ENCODE measurements at regions of chr17 and their contacts with region 1.

Region 1: GRCh38 chr17:44044067-44044466 is 22.4 kb downstream of the LSM12 start:
- DNase-seq: no peak
- H3K4me3 ChIP-seq: no peak overlapping the region
- H3K27ac ChIP-seq: no peak overlapping the region
- H3K4me1 ChIP-seq: peaks cover 7 to 14% of the 10 kb centered on the region in 2 donors
- H3K27me3 ChIP-seq: no peaks in the 10 kb centered on the region
- CTCF ChIP-seq: no peak

Region 2: DNA sequence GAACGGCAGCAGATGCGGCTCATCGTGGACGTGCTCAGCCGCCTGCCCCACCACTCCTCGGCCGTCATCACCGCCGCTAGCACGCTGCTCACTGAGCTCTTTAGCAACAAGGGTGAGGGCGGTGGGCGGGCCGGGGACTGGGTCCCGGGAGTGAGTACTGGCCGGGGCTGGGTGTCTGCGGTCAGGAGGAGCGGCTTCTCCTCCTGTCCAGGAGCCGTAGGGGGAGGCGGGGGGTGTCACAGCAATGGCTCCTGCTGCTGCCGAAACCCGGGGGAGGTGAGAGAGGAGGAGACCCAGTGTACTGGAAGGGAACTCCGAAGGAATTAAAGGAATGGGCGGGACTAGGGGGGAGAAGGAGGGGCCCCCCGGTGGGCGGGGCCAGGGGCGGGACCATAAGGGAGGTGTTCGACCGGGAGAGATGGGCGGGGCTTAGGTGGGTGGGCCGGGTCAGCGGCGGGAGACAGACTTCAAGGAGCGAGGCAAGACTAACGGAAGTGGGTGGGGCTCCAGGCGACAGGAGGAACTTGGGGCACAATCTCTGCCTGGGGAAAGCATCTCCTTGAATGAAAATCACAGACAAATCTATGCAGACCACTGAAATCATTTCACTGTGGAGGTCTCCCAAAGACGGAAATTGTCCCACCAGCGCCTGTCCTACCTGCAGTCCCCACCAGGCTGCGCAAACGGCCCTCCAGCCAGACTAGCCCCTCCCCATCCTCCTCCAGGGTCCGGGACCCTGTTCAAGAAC is 37.3 kb before region 1 on chr17:
- intact Hi-C with region 1: loop called (anchors 5 kb)
- DNase-seq: peak; percentile 98
- H3K4me3 ChIP-seq: peak overlapping the region; percentile 51 to 67
- H3K27ac ChIP-seq: peak overlapping the region in 1 of 2 donors; percentile 32
- H3K4me1 ChIP-seq: peaks cover 4 to 31% of the 10 kb centered on the region in 2 donors
- H3K27me3 ChIP-seq: no peaks in the 10 kb centered on the region
- CTCF ChIP-seq: peak; percentile 39 to 55 (median 53)